Activated CD8-positive, alpha-beta T cell treated with anti-CD3 and anti-CD28 coated beads, Interleukin-2, amount 10 ng/mL, durations not matched to agents 7 days and 5 days (primary cell): ENCODE measurements at regions of chr9 and their contacts with region 1.

Region 1: GRCh38 chr9:113410207-113410864 is at the starts of genes C9orf43 and POLE3:
- DNase-seq: peak; percentile 96
- ATAC-seq: peak; percentile 95
- H3K4me3 Mint-ChIP-seq: peak within 1 kb of the TSS; percentile 88
- H3K27ac Mint-ChIP-seq: peak within 1 kb of the TSS; percentile 100
- H3K4me1 Mint-ChIP-seq: peaks cover 35% of the 10 kb centered on the region
- H3K27me3 Mint-ChIP-seq: no peaks in the 10 kb centered on the region
- total RNA-seq, gene C9orf43: 0.34 to 0.60 TPM
- total RNA-seq, gene POLE3: 78.9 to 81.7 TPM

Region 2: GRCh38 chr9:113349445-113350094 is 60.8 kb before region 1 on chr9 and contains the start of gene BSPRY:
- CTCF ChIA-PET with region 1: interaction called, 3 read pairs
- POLR2A ChIA-PET with region 1: interaction called, 14 read pairs
- DNase-seq: peak; percentile 58
- ATAC-seq: peak; percentile 71
- H3K4me3 Mint-ChIP-seq: peak within 1 kb of the TSS; percentile 78
- H3K27ac Mint-ChIP-seq: peak within 1 kb of the TSS; percentile 63
- H3K4me1 Mint-ChIP-seq: peaks cover 30% of the 10 kb centered on the region
- H3K27me3 Mint-ChIP-seq: no peaks in the 10 kb centered on the region
- total RNA-seq, gene BSPRY: 4.0 to 4.4 TPM